SK-N-SH (cell line): ENCODE measurements at regions of chr2 and their contacts with region 1.

Region 1: DNA sequence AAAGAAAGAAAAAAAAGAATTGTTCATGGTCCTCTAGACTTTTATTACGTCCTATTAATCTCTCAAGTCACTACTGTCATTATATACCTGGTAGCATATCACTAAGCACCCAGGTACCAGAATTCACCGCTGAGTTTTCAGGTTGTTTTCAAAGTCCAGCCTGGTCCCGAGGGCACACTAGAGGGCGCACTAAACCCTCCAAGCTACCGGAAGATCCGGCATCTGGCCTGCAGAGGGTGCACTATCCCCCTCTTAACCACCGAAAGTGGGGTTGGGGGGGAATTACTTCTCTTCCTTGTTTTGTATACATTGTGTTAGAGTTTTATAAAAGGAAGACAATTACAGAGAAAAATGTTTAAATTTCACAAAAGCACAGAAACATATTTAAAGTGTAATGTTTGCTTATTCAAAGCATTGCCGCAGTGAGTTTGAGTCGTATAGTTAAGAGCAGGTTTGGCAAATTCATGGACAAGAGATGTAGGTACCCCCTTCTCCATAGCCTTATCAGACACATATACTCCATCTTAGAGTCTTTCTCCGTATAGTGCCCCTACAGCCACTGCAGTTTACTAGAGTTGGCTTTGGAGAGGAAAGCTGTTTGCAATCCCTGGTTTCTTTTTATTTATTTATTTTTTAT is 19.2 kb downstream of the MOGAT1 start:
- DNase-seq: peak; percentile 89
- H3K4me3 ChIP-seq: peak overlapping the region in 1 of 2 experiments; percentile 51; a peak in 1 of 4 replicates
- H3K27ac ChIP-seq: no peak overlapping the region
- H3K4me1 ChIP-seq: 0 out of 4 replicates have a peak, but pooled peaks cover 0 to 7% of the 10 kb centered on the region in 2 experiments
- H3K27me3 ChIP-seq: no peaks in the 10 kb centered on the region
- CTCF ChIP-seq: peak; percentile 100
- EP300 ChIP-seq: no peak
- RAD21 ChIP-seq: peak; percentile 88

Region 2: DNA sequence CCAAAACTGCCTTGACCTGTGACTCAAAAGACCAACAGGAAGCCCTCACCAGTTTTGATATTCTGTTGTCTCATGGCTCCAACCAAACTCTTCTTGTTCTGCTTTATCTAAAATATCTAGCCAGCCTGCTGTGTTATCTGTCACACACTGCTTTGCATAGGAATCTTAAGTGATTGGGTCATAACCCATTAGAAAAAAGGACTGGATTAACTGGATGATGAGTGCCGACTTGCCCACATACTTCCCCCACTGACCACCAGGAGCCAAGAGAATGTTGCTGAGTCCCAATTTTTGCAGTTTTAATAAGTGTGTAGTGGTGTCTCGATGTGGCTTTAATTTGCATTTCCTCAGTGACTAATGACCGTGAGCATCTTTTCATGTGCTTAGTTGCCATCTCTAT is 12.7 kb before region 1 on chr2:
- CTCF ChIA-PET with region 1: interaction called, 20 read pairs
- POLR2A ChIA-PET with region 1: no interaction called
- DNase-seq: no peak
- H3K4me3 ChIP-seq: no peak overlapping the region
- H3K27ac ChIP-seq: no peak overlapping the region
- H3K4me1 ChIP-seq: no peaks in the 10 kb centered on the region
- H3K27me3 ChIP-seq: peaks cover 7% of the 10 kb centered on the region; the same call in 1 of the 2 replicates
- CTCF ChIP-seq: peak; percentile 20; the same call in 1 of the 2 replicates
- EP300 ChIP-seq: no peak
- RAD21 ChIP-seq: no peak

Region 3: DNA sequence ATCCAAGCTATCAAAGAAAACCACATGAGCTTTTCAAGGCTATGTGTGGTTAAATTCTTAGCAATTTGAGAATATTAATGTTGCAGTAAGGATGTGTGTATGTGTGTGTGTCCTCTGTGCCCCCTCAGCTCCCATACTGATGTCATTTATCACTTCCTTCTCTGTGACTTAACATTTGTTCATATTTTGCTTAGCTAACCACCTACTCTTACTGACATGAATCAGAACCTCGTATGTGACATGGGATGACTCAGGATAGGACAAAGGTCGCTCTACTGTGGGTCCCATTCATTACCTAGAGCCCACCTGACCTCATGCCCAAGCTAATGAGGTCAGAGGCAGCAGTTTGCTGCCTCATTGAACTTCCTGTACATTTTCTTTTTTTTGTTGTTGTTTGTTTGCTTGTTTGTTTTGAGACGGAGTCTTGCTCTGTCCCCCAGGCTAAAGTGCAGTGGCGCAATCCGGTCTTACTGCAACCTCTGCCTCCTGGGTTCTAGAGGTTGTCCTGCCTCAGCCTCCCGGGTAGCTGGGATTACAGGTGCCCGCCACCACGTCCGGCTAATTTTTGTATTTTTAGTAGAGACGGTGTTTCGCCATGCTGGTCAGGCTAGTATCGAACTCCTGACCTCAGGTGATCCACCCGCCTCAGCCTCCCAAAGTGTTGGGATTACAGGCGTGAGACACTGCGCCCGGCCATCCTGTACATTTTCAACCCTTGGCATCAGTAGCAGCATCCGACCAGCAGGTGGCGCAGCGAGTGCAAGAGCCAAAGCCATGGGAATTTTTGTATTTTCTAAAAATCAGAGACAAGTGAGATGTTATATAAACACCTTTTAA is 17.2 kb after region 1 on chr2:
- CTCF ChIA-PET with region 1: interaction called, 51 read pairs
- POLR2A ChIA-PET with region 1: no interaction called
- DNase-seq: peak; percentile 62
- H3K4me3 ChIP-seq: no peak overlapping the region; a peak in 1 of 4 replicates
- H3K27ac ChIP-seq: peak overlapping the region in 1 of 2 experiments; percentile 21; a peak in 2 of 4 replicates
- H3K4me1 ChIP-seq: peaks cover 3 to 6% of the 10 kb centered on the region in 2 experiments; a peak in 2 of 4 replicates
- H3K27me3 ChIP-seq: no peaks in the 10 kb centered on the region
- CTCF ChIP-seq: peak; percentile 99
- EP300 ChIP-seq: no peak
- RAD21 ChIP-seq: peak; percentile 83

Region 4: DNA sequence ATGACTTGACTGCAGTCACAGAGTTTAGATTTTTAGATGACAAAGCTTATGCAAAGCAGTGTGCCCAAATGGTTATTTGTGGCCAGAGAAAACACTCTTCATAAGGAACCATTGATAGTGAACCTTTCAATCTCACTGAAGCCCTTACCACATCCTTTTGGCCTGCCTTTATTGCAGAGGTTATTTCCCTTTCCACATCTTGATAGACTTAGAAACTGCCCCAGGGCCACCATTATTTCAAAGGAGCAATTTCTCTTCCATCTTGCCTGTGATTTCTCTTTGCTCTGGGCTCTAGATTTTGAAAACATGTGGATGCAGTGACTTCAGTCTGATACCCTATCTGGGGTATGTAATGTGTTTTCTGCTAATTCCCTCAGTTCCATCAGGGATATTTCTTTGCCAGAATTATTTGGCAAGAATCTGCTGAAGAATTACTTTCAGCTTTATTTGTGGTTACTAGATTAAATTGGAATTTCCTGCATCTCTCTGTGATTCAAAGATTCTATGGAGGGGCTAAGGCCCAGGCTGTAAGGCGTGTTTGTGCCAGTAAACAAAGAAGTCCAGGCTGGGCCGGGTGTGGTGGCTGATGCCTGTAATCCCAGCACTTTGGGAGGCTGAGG is 31.8 kb after region 1 on chr2:
- CTCF ChIA-PET with region 1: interaction called, 13 read pairs
- POLR2A ChIA-PET with region 1: no interaction called
- DNase-seq: no peak
- H3K4me3 ChIP-seq: no peak overlapping the region
- H3K27ac ChIP-seq: peak overlapping the region; percentile 15 to 17; a peak in 2 of 4 replicates
- H3K4me1 ChIP-seq: peaks cover 0 to 4% of the 10 kb centered on the region in 2 experiments; a peak in 1 of 4 replicates
- H3K27me3 ChIP-seq: no peaks in the 10 kb centered on the region
- CTCF ChIP-seq: no peak
- EP300 ChIP-seq: no peak
- RAD21 ChIP-seq: no peak

Region 5: DNA sequence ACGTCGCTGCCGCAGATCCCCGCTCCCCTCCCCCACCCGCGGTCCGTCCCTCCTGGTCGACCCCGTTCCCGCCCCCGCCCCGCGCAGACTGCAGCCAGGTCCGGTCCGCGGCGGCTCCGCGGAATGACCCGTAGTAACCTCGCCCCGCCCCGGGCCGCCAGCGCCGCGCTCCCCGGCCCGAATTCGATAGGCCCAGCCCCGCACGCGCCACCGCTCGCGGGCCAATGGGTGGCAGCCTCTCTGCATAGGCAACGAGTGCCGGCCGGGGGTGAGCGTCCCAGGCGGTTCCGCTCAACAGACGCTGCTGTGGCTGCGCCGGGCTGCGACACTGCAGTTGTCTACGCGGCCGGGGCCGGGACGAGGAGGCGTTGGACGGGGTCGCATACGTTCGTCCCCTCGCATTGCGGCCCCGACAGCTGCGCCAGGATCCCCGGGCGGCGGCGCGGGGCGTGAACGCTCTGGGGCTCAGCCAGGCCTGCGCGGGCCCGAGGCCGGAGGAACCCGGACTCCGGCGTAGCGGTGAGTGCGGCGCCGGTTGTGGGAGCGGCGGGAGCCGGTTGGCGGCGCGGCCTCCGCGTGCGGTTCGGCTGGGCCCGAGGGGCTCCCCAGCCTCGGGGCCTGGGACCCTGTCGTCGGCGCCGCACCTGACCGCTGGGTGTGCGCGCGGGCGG is 170.2 kb after region 1 on chr2 and contains the start of gene ACSL3:
- CTCF ChIA-PET with region 1: interaction called, 18 read pairs
- POLR2A ChIA-PET with region 1: no interaction called
- DNase-seq: peak; percentile 97
- H3K4me3 ChIP-seq: peak within 1 kb of the TSS; percentile 69 to 95
- H3K27ac ChIP-seq: peak within 1 kb of the TSS; percentile 68 to 95
- H3K4me1 ChIP-seq: peaks cover 25 to 30% of the 10 kb centered on the region in 2 experiments
- H3K27me3 ChIP-seq: no peaks in the 10 kb centered on the region
- CTCF ChIP-seq: no peak; the same call in 1 of the 2 replicates
- EP300 ChIP-seq: peak in 1 of 2 experiments; percentile 31; a peak in 1 of 4 replicates
- RAD21 ChIP-seq: no peak; the same call in 1 of the 2 replicates
- polyA plus RNA-seq, gene ACSL3: 15.7 and 25.2 TPM in 2 replicates

Region 6: DNA sequence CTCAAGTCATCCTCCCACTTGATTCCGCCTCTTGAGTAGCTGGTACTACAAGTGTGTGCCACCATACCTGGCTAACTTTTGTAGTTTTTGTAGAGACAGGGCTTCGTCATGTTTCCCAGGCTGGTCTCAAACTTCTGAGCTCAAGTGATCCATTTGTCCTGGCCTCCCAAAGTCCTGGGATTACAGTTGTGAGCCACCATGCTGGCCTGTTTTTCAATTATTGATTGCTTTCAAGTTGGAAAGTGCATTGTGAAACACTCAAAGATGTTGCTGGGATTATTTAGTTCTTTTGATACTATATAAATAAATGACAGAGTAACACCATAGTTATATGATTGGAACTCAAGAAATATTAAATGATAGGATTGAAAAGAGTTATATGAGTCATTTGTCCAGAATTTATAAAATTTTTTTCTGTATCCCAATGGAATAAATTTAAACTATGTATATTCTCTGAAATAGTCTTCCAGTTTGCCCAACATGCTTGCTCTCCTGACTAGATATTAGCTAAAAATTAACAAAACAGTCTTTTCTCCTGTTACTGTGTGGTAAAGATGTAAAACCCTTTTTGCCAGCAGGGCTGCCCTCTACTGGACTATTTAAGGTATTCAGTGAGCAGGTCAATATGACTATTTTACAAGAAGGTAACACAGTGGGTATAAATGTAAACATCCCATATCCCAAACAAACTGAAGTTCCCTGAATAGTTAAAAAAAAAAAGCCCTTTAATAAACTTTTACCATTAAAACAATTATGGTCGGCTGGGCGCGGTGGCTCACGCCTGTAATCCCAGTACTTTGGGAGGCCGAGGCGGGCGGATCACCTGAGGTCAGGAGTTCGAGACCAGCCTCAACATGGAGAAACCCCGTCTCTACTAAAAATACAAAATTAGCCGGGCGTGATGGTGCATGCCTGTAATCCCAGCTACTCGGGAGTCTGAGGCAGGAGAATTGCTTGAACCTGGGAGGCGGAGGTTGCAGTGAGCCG is 212.8 kb after region 1 on chr2:
- CTCF ChIA-PET with region 1: interaction called, 54 read pairs
- POLR2A ChIA-PET with region 1: interaction called, 3 read pairs
- DNase-seq: peak; percentile 63
- H3K4me3 ChIP-seq: no peak overlapping the region
- H3K27ac ChIP-seq: peak overlapping the region in 1 of 2 experiments; percentile 82; a peak in 2 of 4 replicates
- H3K4me1 ChIP-seq: peaks cover 0 to 24% of the 10 kb centered on the region in 2 experiments; a peak in 1 of 4 replicates
- H3K27me3 ChIP-seq: no peaks in the 10 kb centered on the region
- CTCF ChIP-seq: peak; percentile 89
- EP300 ChIP-seq: no peak
- RAD21 ChIP-seq: peak; percentile 87

Region 7: DNA sequence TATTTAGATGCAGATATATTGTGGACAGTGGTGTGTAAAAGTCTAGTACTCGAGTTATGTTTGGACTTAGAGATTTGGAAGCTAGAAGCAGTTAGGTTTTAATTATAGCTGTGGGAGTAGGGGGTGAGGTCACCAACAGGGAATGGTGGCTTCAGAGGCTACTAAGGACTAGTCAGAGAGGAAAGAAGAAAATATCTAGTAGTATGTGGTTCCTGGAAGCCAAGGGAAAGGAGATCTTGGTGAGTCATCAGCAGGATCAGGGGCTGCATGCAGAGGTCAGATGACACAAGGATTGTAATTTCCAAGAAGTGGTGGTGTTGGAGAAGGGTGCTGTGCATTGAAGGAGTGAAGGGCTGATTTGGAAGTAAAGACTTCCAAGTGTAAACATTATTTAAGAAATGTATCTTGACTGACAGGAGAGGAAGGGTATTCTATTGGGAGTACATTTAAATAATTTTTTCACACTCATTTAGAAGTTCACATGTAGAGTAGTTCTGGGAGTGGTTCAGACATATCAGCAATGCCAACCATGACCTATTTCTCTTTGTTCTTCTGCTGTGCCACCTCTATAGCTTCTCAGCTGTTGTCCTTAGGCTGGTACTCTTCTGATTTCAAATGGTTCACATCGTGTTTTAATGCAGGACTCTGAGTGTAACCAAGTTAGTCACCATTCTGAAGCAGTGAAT is 229.3 kb after region 1 on chr2:
- CTCF ChIA-PET with region 1: interaction called, 18 read pairs
- POLR2A ChIA-PET with region 1: no interaction called
- DNase-seq: no peak
- H3K4me3 ChIP-seq: no peak overlapping the region
- H3K27ac ChIP-seq: peak overlapping the region in 1 of 2 experiments; percentile 68; a peak in 3 of 4 replicates
- H3K4me1 ChIP-seq: peaks cover 2 to 9% of the 10 kb centered on the region in 2 experiments; a peak in 3 of 4 replicates
- H3K27me3 ChIP-seq: no peaks in the 10 kb centered on the region
- CTCF ChIP-seq: no peak
- EP300 ChIP-seq: peak in 1 of 2 experiments; percentile 58; a peak in 1 of 4 replicates
- RAD21 ChIP-seq: no peak

Region 8: GRCh38 chr2:223027442-223027841 is 336.8 kb after region 1 on chr2:
- CTCF ChIA-PET with region 1: no interaction called
- POLR2A ChIA-PET with region 1: no interaction called
- DNase-seq: no peak
- H3K4me3 ChIP-seq: no peak overlapping the region
- H3K27ac ChIP-seq: peak overlapping the region in 1 of 2 experiments; percentile 40; a peak in 1 of 4 replicates
- H3K4me1 ChIP-seq: peaks cover 0 to 11% of the 10 kb centered on the region in 2 experiments; a peak in 2 of 4 replicates
- H3K27me3 ChIP-seq: no peaks in the 10 kb centered on the region
- CTCF ChIP-seq: no peak
- EP300 ChIP-seq: no peak
- RAD21 ChIP-seq: no peak